ENCODE measurements at regions of chr10 and their contacts with region 1.

Region 1: GRCh38 chr10:114470956-114471905 is 66.9 kb upstream of the AFAP1L2 start:
- DNase-seq: peak; percentile 77
- ATAC-seq: peak; percentile 95
- H3K4me3 Mint-ChIP-seq: no peak overlapping the region
- H3K27ac Mint-ChIP-seq: no peak overlapping the region
- H3K4me1 Mint-ChIP-seq: peaks cover 16% of the 10 kb centered on the region
- H3K27me3 Mint-ChIP-seq: no peaks in the 10 kb centered on the region

Region 2: GRCh38 chr10:114271779-114272167 is 199.5 kb before region 1 on chr10:
- CTCF ChIA-PET with region 1: no interaction called
- POLR2A ChIA-PET with region 1: no interaction called
- DNase-seq: no peak
- ATAC-seq: no peak
- H3K4me3 Mint-ChIP-seq: no peak overlapping the region
- H3K27ac Mint-ChIP-seq: no peak overlapping the region
- H3K4me1 Mint-ChIP-seq: no peaks in the 10 kb centered on the region
- H3K27me3 Mint-ChIP-seq: peaks cover 6% of the 10 kb centered on the region

Region 3: GRCh38 chr10:114388275-114388674 is 83.0 kb before region 1 on chr10:
- CTCF ChIA-PET with region 1: no interaction called
- POLR2A ChIA-PET with region 1: no interaction called
- DNase-seq: peak; percentile 31
- ATAC-seq: peak; percentile 33
- H3K4me3 Mint-ChIP-seq: no peak overlapping the region
- H3K27ac Mint-ChIP-seq: peak overlapping the region; percentile 9
- H3K4me1 Mint-ChIP-seq: peaks cover 15% of the 10 kb centered on the region
- H3K27me3 Mint-ChIP-seq: no peaks in the 10 kb centered on the region

Region 4: GRCh38 chr10:114458955-114459354 is 12.3 kb before region 1 on chr10:
- CTCF ChIA-PET with region 1: interaction called, 18 read pairs
- POLR2A ChIA-PET with region 1: no interaction called
- DNase-seq: peak; percentile 44
- ATAC-seq: peak; percentile 61
- H3K4me3 Mint-ChIP-seq: no peak overlapping the region
- H3K27ac Mint-ChIP-seq: no peak overlapping the region
- H3K4me1 Mint-ChIP-seq: peaks cover 10% of the 10 kb centered on the region
- H3K27me3 Mint-ChIP-seq: no peaks in the 10 kb centered on the region

Region 5: GRCh38 chr10:114492351-114493037 is 21.3 kb after region 1 on chr10:
- CTCF ChIA-PET with region 1: interaction called, 38 read pairs
- POLR2A ChIA-PET with region 1: no interaction called
- DNase-seq: peak; percentile 66
- ATAC-seq: peak; percentile 59
- H3K4me3 Mint-ChIP-seq: peak overlapping the region; percentile 53
- H3K27ac Mint-ChIP-seq: peak overlapping the region; percentile 68
- H3K4me1 Mint-ChIP-seq: peaks cover 72% of the 10 kb centered on the region
- H3K27me3 Mint-ChIP-seq: no peaks in the 10 kb centered on the region

Region 6: DNA sequence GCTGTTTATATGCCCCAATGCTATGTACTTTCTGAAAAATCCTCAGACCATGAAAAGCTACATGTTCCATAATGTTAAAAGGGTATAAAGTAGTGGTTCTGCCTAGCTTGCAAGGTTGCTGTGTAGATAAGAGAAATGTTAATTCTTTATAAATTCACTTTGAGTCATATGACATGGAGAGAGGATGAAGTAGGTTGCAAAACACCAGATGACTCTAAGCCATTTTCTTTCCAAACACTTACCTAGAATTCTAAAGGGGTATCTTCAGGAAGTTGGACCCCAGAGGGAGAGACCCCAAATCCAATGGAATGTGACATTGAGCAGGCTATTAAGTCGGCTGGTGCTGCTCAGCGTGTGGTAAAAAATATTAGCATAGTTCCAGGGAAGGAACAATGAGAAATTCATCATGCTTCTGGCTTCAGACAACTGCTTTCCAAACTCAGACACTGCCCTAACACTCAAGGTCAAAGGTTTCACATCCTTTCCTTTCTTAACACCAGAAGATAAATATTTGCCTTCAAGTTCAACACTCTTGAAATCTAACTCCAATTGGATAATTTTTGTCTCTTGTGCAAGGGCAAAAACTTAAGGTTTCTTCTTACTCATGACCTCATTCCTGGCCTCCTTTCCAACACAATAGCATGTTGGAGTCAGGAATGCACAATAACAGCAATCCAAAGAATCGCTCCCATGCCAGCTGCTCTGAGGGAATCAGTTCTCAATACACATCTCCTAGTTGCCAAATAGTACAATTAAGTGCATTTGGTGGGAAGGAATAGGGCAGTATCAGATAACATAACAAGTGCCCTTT is 33.7 kb after region 1 on chr10:
- CTCF ChIA-PET with region 1: interaction called, 13 read pairs
- POLR2A ChIA-PET with region 1: no interaction called
- DNase-seq: no peak
- ATAC-seq: no peak
- H3K4me3 Mint-ChIP-seq: no peak overlapping the region
- H3K27ac Mint-ChIP-seq: no peak overlapping the region
- H3K4me1 Mint-ChIP-seq: peaks cover 76% of the 10 kb centered on the region
- H3K27me3 Mint-ChIP-seq: no peaks in the 10 kb centered on the region

Region 7: DNA sequence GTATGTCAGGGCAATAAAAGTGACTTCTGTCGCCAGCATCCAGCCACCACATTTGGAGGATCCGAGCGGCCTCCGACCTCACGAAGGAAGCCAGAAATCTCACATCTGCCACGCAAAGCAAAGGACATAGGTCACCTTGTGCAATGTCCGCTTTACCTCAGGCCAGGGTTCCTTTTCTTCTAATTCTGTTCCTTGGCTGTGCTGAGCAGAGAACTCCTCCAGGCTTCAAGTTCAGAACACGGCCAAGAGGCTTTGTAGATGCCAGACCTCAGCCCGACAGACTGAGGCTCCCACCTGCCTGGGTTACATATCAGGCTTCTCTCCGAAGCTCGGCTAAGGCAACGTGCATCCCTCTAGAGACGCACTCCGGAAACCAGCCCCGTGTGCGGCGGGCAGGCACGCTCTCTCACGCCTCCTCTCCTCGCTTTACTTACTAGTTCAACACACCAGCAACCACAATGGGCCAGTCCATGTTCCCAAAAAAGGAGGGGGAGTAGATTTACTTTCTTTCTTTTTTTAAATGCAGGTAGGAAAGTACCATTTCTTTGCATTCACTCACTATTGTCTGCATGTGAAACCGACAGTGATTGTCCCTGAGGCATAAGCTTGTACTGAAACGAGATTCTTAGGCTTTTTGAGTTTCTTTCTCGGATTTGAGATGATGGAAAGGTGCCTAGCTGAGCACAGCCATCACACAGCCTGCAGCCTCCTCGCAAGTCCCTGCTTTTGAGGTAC is 55.4 kb after region 1 on chr10:
- CTCF ChIA-PET with region 1: interaction called, 128 read pairs
- POLR2A ChIA-PET with region 1: no interaction called
- DNase-seq: peak; percentile 96
- ATAC-seq: peak; percentile 96
- H3K4me3 Mint-ChIP-seq: peak overlapping the region; percentile 84
- H3K27ac Mint-ChIP-seq: peak overlapping the region; percentile 94
- H3K4me1 Mint-ChIP-seq: peaks cover 68% of the 10 kb centered on the region
- H3K27me3 Mint-ChIP-seq: no peaks in the 10 kb centered on the region

Region 8: GRCh38 chr10:114550756-114551635 is 79.8 kb after region 1 on chr10:
- CTCF ChIA-PET with region 1: interaction called, 84 read pairs
- POLR2A ChIA-PET with region 1: no interaction called
- DNase-seq: no peak
- ATAC-seq: no peak
- H3K4me3 Mint-ChIP-seq: no peak overlapping the region
- H3K27ac Mint-ChIP-seq: no peak overlapping the region
- H3K4me1 Mint-ChIP-seq: peaks cover 28% of the 10 kb centered on the region
- H3K27me3 Mint-ChIP-seq: no peaks in the 10 kb centered on the region

Region 9: GRCh38 chr10:114783686-114784085 is 312.5 kb after region 1 on chr10:
- CTCF ChIA-PET with region 1: interaction called, 12 read pairs
- POLR2A ChIA-PET with region 1: no interaction called
- DNase-seq: no peak
- ATAC-seq: no peak
- H3K4me3 Mint-ChIP-seq: no peak overlapping the region
- H3K27ac Mint-ChIP-seq: no peak overlapping the region
- H3K4me1 Mint-ChIP-seq: peaks cover 10% of the 10 kb centered on the region
- H3K27me3 Mint-ChIP-seq: peaks cover 11% of the 10 kb centered on the region